ENCODE measurements at regions of chr9 and their contacts with region 1.

Region 1: GRCh38 chr9:79571309-79572031 is at the start of gene TLE4:
- DNase-seq: peak; percentile 100
- ATAC-seq: peak; percentile 83
- H3K4me3 Mint-ChIP-seq: peak within 1 kb of the TSS; percentile 57
- H3K27ac Mint-ChIP-seq: no peak within 1 kb of the TSS
- H3K4me1 Mint-ChIP-seq: peaks cover 23% of the 10 kb centered on the region
- H3K27me3 Mint-ChIP-seq: peaks cover 6% of the 10 kb centered on the region
- CTCF ChIP-seq: no peak
- total RNA-seq, gene TLE4: 48.1 to 50.9 TPM (median 49.8 TPM) in 3 replicates

Region 2: GRCh38 chr9:79583952-79584654 is 12.6 kb after region 1 on chr9:
- CTCF ChIA-PET with region 1: no interaction called
- POLR2A ChIA-PET with region 1: interaction called, 10 read pairs
- DNase-seq: no peak
- ATAC-seq: peak; percentile 73
- H3K4me3 Mint-ChIP-seq: no peak overlapping the region
- H3K27ac Mint-ChIP-seq: no peak overlapping the region
- H3K4me1 Mint-ChIP-seq: peaks cover 46% of the 10 kb centered on the region
- H3K27me3 Mint-ChIP-seq: no peaks in the 10 kb centered on the region
- CTCF ChIP-seq: no peak

Region 3: GRCh38 chr9:79694676-79695400 is 123.4 kb after region 1 on chr9:
- CTCF ChIA-PET with region 1: interaction called, 4 read pairs
- POLR2A ChIA-PET with region 1: interaction called, 15 read pairs
- DNase-seq: peak; percentile 22
- ATAC-seq: peak; percentile 81
- H3K4me3 Mint-ChIP-seq: peak overlapping the region; percentile 32
- H3K27ac Mint-ChIP-seq: peak overlapping the region; percentile 92
- H3K4me1 Mint-ChIP-seq: peaks cover 79% of the 10 kb centered on the region
- H3K27me3 Mint-ChIP-seq: no peaks in the 10 kb centered on the region
- CTCF ChIP-seq: no peak

Measured in WTC11 (cell line).